SK-N-SH (cell line): ENCODE measurements at regions of chr22 and their contacts with region 1.

Region 1: GRCh38 chr22:41403532-41404318 is 22.0 kb downstream of the TEF start:
- DNase-seq: peak; percentile 82
- H3K4me3 ChIP-seq: no peak overlapping the region; a peak in 1 of 4 replicates
- H3K27ac ChIP-seq: no peak overlapping the region; a peak in 1 of 4 replicates
- H3K4me1 ChIP-seq: peaks cover 10 to 16% of the 10 kb centered on the region in 2 experiments; a peak in 2 of 4 replicates
- H3K27me3 ChIP-seq: no peaks in the 10 kb centered on the region
- CTCF ChIP-seq: peak; percentile 69
- EP300 ChIP-seq: no peak
- RAD21 ChIP-seq: peak; percentile 80

Region 2: GRCh38 chr22:41381329-41382097 is 22.2 kb before region 1 on chr22 and contains the start of gene TEF:
- CTCF ChIA-PET with region 1: interaction called, 6 read pairs
- POLR2A ChIA-PET with region 1: interaction called, 10 read pairs
- DNase-seq: peak; percentile 92
- H3K4me3 ChIP-seq: peak within 1 kb of the TSS; percentile 57 to 60
- H3K27ac ChIP-seq: peak within 1 kb of the TSS; percentile 69 to 87
- H3K4me1 ChIP-seq: peaks cover 0 to 15% of the 10 kb centered on the region in 2 experiments; a peak in 2 of 4 replicates
- H3K27me3 ChIP-seq: no peaks in the 10 kb centered on the region
- CTCF ChIP-seq: no peak
- EP300 ChIP-seq: no peak
- RAD21 ChIP-seq: no peak
- polyA plus RNA-seq, gene TEF: 3.6 and 5.0 TPM in 2 replicates

Region 3: DNA sequence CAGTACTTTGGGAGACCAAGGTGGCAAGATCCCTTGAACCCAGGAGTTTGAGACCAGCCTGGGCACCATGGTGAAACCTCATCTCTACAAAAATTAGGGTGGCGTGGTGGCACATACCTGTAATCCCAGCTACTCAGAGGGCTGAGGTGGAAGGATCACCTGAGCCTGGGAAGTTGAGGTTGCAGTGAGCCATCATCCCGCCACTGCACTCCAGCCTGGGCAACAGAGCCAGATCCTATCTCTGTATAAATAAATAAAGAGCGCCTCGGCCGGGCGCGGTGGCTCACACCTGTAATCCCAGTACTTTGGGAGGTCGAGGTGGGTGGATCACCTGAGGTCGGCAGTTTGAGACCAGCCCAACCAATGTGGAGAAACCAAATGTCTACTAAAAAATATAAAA is 15.0 kb after region 1 on chr22:
- CTCF ChIA-PET with region 1: no interaction called
- POLR2A ChIA-PET with region 1: no interaction called
- DNase-seq: no peak
- H3K4me3 ChIP-seq: no peak overlapping the region
- H3K27ac ChIP-seq: no peak overlapping the region
- H3K4me1 ChIP-seq: peaks cover 0 to 18% of the 10 kb centered on the region in 2 experiments; a peak in 1 of 4 replicates
- H3K27me3 ChIP-seq: no peaks in the 10 kb centered on the region
- CTCF ChIP-seq: no peak
- EP300 ChIP-seq: no peak
- RAD21 ChIP-seq: no peak

Region 4: GRCh38 chr22:41444360-41445128 is 40.8 kb after region 1 on chr22:
- CTCF ChIA-PET with region 1: interaction called, 5 read pairs
- POLR2A ChIA-PET with region 1: interaction called, 15 read pairs
- DNase-seq: peak; percentile 82
- H3K4me3 ChIP-seq: peak overlapping the region; percentile 68 to 74
- H3K27ac ChIP-seq: peak overlapping the region; percentile 84 to 85
- H3K4me1 ChIP-seq: peaks cover 0 to 5% of the 10 kb centered on the region in 2 experiments; a peak in 2 of 4 replicates
- H3K27me3 ChIP-seq: no peaks in the 10 kb centered on the region
- CTCF ChIP-seq: no peak
- EP300 ChIP-seq: no peak
- RAD21 ChIP-seq: no peak

Region 5: GRCh38 chr22:41517172-41518047 is 113.7 kb after region 1 on chr22:
- CTCF ChIA-PET with region 1: interaction called, 69 read pairs
- POLR2A ChIA-PET with region 1: interaction called, 4 read pairs
- DNase-seq: peak; percentile 75
- H3K4me3 ChIP-seq: no peak overlapping the region; a peak in 1 of 4 replicates
- H3K27ac ChIP-seq: no peak overlapping the region
- H3K4me1 ChIP-seq: peaks cover 2 to 7% of the 10 kb centered on the region in 2 experiments; a peak in 2 of 4 replicates
- H3K27me3 ChIP-seq: no peaks in the 10 kb centered on the region
- CTCF ChIP-seq: peak; percentile 66
- EP300 ChIP-seq: no peak
- RAD21 ChIP-seq: peak; percentile 81

Region 6: GRCh38 chr22:41532908-41533825 is 129.4 kb after region 1 on chr22:
- CTCF ChIA-PET with region 1: interaction called, 11 read pairs
- POLR2A ChIA-PET with region 1: no interaction called
- DNase-seq: peak; percentile 71
- H3K4me3 ChIP-seq: no peak overlapping the region; a peak in 1 of 4 replicates
- H3K27ac ChIP-seq: no peak overlapping the region
- H3K4me1 ChIP-seq: no peaks in the 10 kb centered on the region; a peak in 1 of 4 replicates
- H3K27me3 ChIP-seq: no peaks in the 10 kb centered on the region
- CTCF ChIP-seq: peak; percentile 64
- EP300 ChIP-seq: no peak
- RAD21 ChIP-seq: peak; percentile 41

Region 7: DNA sequence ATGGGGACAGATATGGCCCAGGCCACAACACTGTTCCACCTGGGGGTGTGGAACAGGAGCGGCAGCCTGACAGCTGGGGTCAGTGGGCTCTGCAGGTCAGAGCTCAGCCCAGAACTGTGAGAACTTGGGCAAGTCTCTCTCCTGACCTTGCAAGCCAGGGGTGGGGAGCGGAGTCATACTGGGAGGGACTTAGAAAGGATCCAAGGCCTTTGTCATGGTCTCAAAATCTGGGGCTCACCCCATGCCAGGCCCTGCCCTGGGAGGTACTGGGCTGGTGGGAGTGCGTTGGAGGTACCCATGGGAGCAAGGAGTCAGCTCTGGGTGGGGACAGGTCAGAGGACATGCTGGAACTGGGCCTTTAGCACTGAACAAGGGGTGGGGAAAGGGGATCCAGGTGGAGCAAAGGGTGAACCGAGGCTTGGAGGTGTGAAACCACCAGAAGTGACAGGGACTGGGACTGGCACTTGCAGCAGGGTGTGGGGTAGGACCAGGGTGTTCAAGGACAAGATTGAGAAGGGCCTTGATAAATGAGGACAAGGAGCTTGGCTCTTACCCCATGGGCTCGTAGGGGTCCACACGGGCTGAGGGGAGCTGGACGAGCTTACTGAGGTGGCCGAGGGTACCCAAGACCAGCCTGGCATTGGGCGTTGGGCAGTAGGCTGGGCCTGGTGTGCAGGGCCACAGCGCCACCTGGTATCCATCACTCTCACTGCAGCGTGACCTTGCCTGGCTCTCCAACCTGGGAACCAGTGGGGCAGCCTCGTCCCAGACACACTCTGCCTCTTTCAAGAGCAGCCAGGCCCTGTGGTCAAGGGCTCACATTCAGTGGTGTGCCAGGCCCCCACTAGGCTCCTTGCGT is 193.3 kb after region 1 on chr22:
- CTCF ChIA-PET with region 1: interaction called, 10 read pairs
- POLR2A ChIA-PET with region 1: no interaction called
- DNase-seq: peak; percentile 76
- H3K4me3 ChIP-seq: no peak overlapping the region; a peak in 1 of 4 replicates
- H3K27ac ChIP-seq: peak overlapping the region; percentile 53 to 65; a peak in 3 of 4 replicates
- H3K4me1 ChIP-seq: peaks cover 5 to 14% of the 10 kb centered on the region in 2 experiments; a peak in 2 of 4 replicates
- H3K27me3 ChIP-seq: no peaks in the 10 kb centered on the region
- CTCF ChIP-seq: peak; percentile 63
- EP300 ChIP-seq: no peak
- RAD21 ChIP-seq: peak; percentile 78